Activated CD4-positive, alpha-beta T cell treated with anti-CD3 and anti-CD28 coated beads, Interleukin-2, amount 10 ng/mL, durations not matched to agents 24 days and 14 days (primary cell): ENCODE measurements at regions of chr20 and their contacts with region 1.

Region 1: DNA sequence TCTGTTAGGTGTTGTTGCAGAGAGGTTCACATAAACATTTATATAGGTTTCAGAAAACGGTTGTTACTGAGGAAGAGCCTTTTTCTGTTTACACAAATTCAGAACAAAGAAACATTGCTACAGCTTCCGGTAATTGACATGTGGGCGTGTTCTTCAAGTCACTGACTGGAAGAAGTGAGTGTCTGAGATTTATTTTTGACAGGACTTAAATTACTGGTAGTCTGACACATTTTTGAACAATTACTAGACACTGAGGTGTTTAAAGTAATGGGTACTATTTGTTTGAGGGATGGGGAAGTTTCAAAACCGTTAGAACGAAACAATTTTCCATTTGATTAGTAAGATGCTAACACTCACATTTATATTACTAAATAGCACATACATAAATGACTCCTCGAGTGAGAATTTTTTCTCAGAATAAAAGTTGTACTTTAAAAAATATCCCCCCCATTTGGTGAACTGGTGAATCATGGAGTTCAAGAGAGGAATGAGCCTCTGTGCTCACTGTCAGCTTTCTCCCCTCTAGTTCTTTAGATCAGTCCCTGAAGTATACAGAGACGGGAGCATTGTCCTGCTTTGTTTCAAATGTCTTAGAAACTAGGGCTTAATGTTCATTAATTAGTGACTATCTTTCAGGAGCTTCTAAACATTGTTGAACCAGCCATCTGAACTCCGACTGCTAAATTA is 98.7 kb downstream of the TSHZ2 start:
- DNase-seq: peak; percentile 74
- H3K4me3 Mint-ChIP-seq: peak overlapping the region; percentile 21
- H3K27ac Mint-ChIP-seq: peak overlapping the region; percentile 82
- H3K4me1 Mint-ChIP-seq: peaks cover 44% of the 10 kb centered on the region
- H3K27me3 Mint-ChIP-seq: no peaks in the 10 kb centered on the region

Region 2: DNA sequence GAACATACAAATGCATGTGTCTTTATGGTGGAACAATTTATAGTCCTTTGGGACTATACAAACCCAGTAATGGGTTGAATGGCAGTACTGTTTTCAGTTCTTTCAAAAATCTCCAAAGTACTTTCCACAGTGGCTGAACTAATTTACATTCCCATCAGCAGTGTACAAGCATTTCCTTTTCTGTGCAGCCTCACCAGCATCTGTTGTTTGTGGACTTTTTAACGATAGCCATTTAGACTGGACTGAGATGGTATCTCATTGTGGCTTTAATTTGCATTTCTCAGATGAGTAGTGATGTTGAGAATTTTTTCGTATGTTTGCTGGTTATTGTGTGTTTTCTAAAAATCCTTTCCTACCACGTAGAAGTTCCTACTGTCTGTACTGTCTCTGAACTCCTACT is 552.1 kb before region 1 on chr20:
- intact Hi-C with region 1: no loop called
- DNase-seq: no peak
- H3K4me3 Mint-ChIP-seq: no peak overlapping the region
- H3K27ac Mint-ChIP-seq: no peak overlapping the region
- H3K4me1 Mint-ChIP-seq: no peaks in the 10 kb centered on the region
- H3K27me3 Mint-ChIP-seq: peaks cover 2% of the 10 kb centered on the region

Region 3: DNA sequence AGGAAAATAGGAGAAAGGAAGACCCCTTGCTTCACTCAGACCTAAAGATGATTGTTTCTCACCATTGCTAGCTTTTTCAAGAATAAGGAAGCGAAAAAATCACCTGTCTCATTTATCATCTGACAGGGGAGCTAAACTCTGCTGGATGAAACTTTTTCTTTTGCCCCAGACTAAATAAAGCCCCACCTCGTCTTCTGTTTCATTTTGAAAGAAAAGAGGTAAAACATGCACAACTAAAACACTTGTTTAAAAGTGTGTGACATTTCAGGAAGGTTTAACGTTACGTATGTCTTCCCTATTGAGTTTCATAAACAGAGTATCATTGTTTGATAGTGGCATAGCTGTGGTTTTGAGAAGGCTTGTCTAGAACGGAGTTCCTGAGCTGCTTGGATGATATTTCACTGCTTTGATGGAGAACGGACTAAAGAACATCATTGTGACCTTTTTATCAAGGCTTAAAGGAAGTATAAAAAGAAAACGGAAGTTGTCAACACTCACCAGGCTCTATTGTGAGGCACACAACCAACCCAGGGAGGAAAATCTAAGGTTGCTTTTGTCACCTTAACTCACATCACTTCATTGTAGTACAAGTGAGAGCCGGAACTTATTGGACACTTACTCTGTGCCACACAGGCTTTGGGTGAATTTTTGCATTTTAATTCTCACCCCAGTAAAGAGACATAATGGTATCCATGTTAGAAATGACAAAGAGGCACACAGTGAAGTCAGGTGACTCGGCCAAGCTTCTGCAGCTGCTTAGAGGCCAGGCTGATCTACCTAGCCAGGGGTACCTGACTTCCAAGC is 69.1 kb before region 1 on chr20:
- intact Hi-C with region 1: loop called (anchors 2 kb)
- DNase-seq: peak; percentile 72
- H3K4me3 Mint-ChIP-seq: peak overlapping the region; percentile 80
- H3K27ac Mint-ChIP-seq: peak overlapping the region; percentile 98
- H3K4me1 Mint-ChIP-seq: peaks cover 38% of the 10 kb centered on the region
- H3K27me3 Mint-ChIP-seq: no peaks in the 10 kb centered on the region

Region 4: GRCh38 chr20:53021934-53022333 is 48.9 kb before region 1 on chr20:
- intact Hi-C with region 1: loop called (anchors 1 kb)
- DNase-seq: peak; percentile 80
- H3K4me3 Mint-ChIP-seq: peak overlapping the region; percentile 65
- H3K27ac Mint-ChIP-seq: peak overlapping the region; percentile 85
- H3K4me1 Mint-ChIP-seq: peaks cover 71% of the 10 kb centered on the region
- H3K27me3 Mint-ChIP-seq: no peaks in the 10 kb centered on the region

Region 5: DNA sequence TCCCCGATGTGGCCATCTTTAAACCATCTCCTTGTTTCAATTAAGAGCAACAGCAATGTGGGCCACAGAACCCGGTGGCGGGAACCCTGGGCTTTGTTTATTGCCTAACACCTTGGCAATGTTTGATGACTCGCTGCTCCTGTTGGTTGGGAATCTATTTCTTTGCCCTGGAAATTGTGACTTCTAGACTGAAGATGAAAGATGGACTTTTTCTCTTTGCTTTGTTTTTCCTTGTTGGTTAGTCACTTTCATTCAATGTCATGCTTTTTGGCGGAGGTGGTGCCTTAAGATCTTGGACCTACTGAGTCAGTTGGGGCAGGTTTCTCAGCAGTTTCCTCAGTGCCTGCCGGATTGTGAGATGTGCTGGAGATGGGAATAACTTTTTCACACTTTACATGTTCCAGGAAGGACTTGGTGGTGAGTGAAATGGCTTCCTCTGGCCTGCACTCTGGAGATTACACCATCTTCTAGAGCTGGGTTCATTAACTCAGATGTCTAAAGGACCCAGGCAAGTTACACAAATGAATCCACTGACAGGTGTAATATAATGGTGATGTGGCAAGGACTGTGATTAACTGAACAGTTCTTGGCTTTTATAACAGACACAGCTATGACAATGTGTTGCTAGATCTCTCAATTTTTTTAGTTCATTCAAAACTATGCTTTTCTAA is 42.4 kb before region 1 on chr20:
- intact Hi-C with region 1: loop called (anchors 1 kb)
- DNase-seq: no peak
- H3K4me3 Mint-ChIP-seq: peak overlapping the region; percentile 37
- H3K27ac Mint-ChIP-seq: peak overlapping the region; percentile 86
- H3K4me1 Mint-ChIP-seq: peaks cover 52% of the 10 kb centered on the region
- H3K27me3 Mint-ChIP-seq: no peaks in the 10 kb centered on the region

Region 6: GRCh38 chr20:53104889-53105288 is 34.0 kb after region 1 on chr20:
- intact Hi-C with region 1: no loop called
- DNase-seq: no peak
- H3K4me3 Mint-ChIP-seq: no peak overlapping the region
- H3K27ac Mint-ChIP-seq: no peak overlapping the region
- H3K4me1 Mint-ChIP-seq: peaks cover 7% of the 10 kb centered on the region
- H3K27me3 Mint-ChIP-seq: no peaks in the 10 kb centered on the region

Region 7: GRCh38 chr20:53202777-53203176 is 131.9 kb after region 1 on chr20:
- intact Hi-C with region 1: loop called (anchors 5 kb)
- DNase-seq: no peak
- H3K4me3 Mint-ChIP-seq: no peak overlapping the region
- H3K27ac Mint-ChIP-seq: peak overlapping the region; percentile 62
- H3K4me1 Mint-ChIP-seq: peaks cover 15% of the 10 kb centered on the region
- H3K27me3 Mint-ChIP-seq: no peaks in the 10 kb centered on the region